Naive thymus-derived CD4-positive, alpha-beta T cell (primary cell): ENCODE measurements at regions of chr3 and their contacts with region 1.

Region 1: DNA sequence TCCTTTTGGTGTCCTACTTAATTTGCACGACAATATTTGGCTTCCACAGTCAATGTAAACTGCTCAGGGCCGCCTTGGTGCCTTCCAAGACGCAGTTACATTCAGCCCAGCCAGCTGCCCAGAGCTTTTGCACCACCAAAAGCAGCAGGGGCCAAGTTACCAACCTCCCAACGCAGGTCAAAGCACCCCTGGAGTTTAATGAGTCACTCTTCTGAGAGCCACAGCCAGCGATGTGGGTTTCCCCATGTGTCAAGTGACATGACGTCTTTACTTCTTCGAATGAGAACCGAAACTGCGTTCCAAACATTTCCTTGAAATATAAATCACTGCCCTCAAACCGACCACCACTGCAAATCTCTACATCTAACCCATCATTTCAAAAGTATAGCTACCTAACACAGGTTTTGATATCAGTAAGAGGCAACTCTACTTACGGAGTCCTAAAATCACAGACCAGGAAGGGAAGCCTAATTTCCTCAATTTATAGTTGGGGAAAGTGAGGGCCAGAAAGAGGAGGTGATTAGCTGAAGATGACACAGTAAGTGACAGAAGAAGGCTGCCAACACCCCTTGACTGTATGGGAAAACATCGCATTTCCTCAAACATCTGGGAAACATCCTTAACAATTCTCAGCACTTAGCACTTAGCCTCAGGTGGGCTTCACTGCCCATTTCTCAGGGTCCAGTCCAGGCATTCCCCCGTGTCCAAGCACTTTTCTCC is 24.5 kb downstream of the MB21D2 start:
- DNase-seq: peak in 8 of 9 donors; percentile 20 to 68 (median 41)
- ATAC-seq: peak; percentile 89
- H3K4me3 ChIP-seq: peak overlapping the region; percentile 29
- H3K4me3 Mint-ChIP-seq: peak overlapping the region; percentile 39 to 87 (median 74)
- H3K27ac ChIP-seq: peak overlapping the region; percentile 73
- H3K27ac Mint-ChIP-seq: peak overlapping the region; percentile 77 to 95 (median 91)
- H3K4me1 ChIP-seq: peaks cover 4 to 21% of the 10 kb centered on the region in 2 donors
- H3K4me1 Mint-ChIP-seq: peaks cover 15 to 91% (median 46%) of the 10 kb centered on the region in 7 donors
- H3K27me3 ChIP-seq: no peaks in the 10 kb centered on the region
- H3K27me3 Mint-ChIP-seq: peaks cover 0 to 20% (median 3%) of the 10 kb centered on the region in 5 donors

Region 2: GRCh38 chr3:192831111-192831644 is 62.0 kb before region 1 on chr3:
- CTCF ChIA-PET with region 1: no interaction called
- POLR2A ChIA-PET with region 1: no interaction called
- intact Hi-C with region 1: loop called in 1 of 2 experiments (anchors 2 kb)
- DNase-seq: peak in 1 of 9 donors; percentile 44
- ATAC-seq: no peak
- H3K4me3 ChIP-seq: no peak overlapping the region
- H3K4me3 Mint-ChIP-seq: peak overlapping the region in 1 of 10 donors; percentile 21
- H3K27ac ChIP-seq: no peak overlapping the region
- H3K27ac Mint-ChIP-seq: peak overlapping the region in 1 of 9 donors; percentile 15
- H3K4me1 ChIP-seq: no peaks in the 10 kb centered on the region
- H3K4me1 Mint-ChIP-seq: peaks cover 1 to 49% (median 7%) of the 10 kb centered on the region in 7 donors
- H3K27me3 ChIP-seq: no peaks in the 10 kb centered on the region
- H3K27me3 Mint-ChIP-seq: peaks cover 0 to 7% (median 0%) of the 10 kb centered on the region in 5 donors

Region 3: GRCh38 chr3:192851821-192852424 is 41.2 kb before region 1 on chr3:
- CTCF ChIA-PET with region 1: no interaction called
- POLR2A ChIA-PET with region 1: no interaction called
- intact Hi-C with region 1: loop called in 1 of 2 experiments (anchors 2 kb)
- DNase-seq: no peak
- ATAC-seq: peak; percentile 62
- H3K4me3 ChIP-seq: no peak overlapping the region
- H3K4me3 Mint-ChIP-seq: peak overlapping the region in 1 of 10 donors; percentile 12
- H3K27ac ChIP-seq: no peak overlapping the region
- H3K27ac Mint-ChIP-seq: peak overlapping the region in 1 of 9 donors; percentile 43
- H3K4me1 ChIP-seq: no peaks in the 10 kb centered on the region
- H3K4me1 Mint-ChIP-seq: peaks cover 0 to 58% (median 10%) of the 10 kb centered on the region in 7 donors
- H3K27me3 ChIP-seq: no peaks in the 10 kb centered on the region
- H3K27me3 Mint-ChIP-seq: peaks cover 0 to 4% (median 0%) of the 10 kb centered on the region in 5 donors

Region 4: GRCh38 chr3:194561306-194561974 is 1668.3 kb after region 1 on chr3:
- CTCF ChIA-PET with region 1: no interaction called
- POLR2A ChIA-PET with region 1: no interaction called
- intact Hi-C with region 1: no loop called
- DNase-seq: no peak
- ATAC-seq: peak; percentile 47
- H3K4me3 ChIP-seq: no peak overlapping the region
- H3K4me3 Mint-ChIP-seq: no peak overlapping the region
- H3K27ac ChIP-seq: no peak overlapping the region
- H3K27ac Mint-ChIP-seq: no peak overlapping the region
- H3K4me1 ChIP-seq: no peaks in the 10 kb centered on the region
- H3K4me1 Mint-ChIP-seq: peaks cover 0 to 7% (median 5%) of the 10 kb centered on the region in 7 donors
- H3K27me3 ChIP-seq: no peaks in the 10 kb centered on the region
- H3K27me3 Mint-ChIP-seq: peaks cover 0 to 14% (median 0%) of the 10 kb centered on the region in 5 donors